ENCODE measurements at regions of chr14 and their contacts with region 1.

Region 1: GRCh38 chr14:45267071-45267470 is 14.1 kb upstream of the MIS18BP1 start:
- DNase-seq: no peak
- ATAC-seq: no peak
- H3K4me3 Mint-ChIP-seq: no peak overlapping the region
- H3K27ac Mint-ChIP-seq: no peak overlapping the region
- H3K4me1 Mint-ChIP-seq: no peaks in the 10 kb centered on the region
- H3K27me3 Mint-ChIP-seq: no peaks in the 10 kb centered on the region
- CTCF ChIP-seq: no peak

Region 2: GRCh38 chr14:44912041-44912869 is 354.8 kb before region 1 on chr14:
- CTCF ChIA-PET with region 1: interaction called, 14 read pairs
- POLR2A ChIA-PET with region 1: no interaction called
- intact Hi-C with region 1: no loop called
- DNase-seq: no peak
- ATAC-seq: peak; percentile 42
- H3K4me3 Mint-ChIP-seq: peak overlapping the region; percentile 21
- H3K27ac Mint-ChIP-seq: no peak overlapping the region
- H3K4me1 Mint-ChIP-seq: peaks cover 6% of the 10 kb centered on the region
- H3K27me3 Mint-ChIP-seq: peaks cover 26% of the 10 kb centered on the region
- CTCF ChIP-seq: no peak

Region 3: GRCh38 chr14:45253068-45253753 is 13.9 kb before region 1 on chr14 and contains the start of gene MIS18BP1:
- CTCF ChIA-PET with region 1: interaction called, 20 read pairs
- POLR2A ChIA-PET with region 1: interaction called, 3 read pairs
- intact Hi-C with region 1: no loop called
- DNase-seq: peak; percentile 97
- ATAC-seq: peak; percentile 93
- H3K4me3 Mint-ChIP-seq: peak within 1 kb of the TSS; percentile 91
- H3K27ac Mint-ChIP-seq: peak within 1 kb of the TSS; percentile 96
- H3K4me1 Mint-ChIP-seq: peaks cover 24% of the 10 kb centered on the region
- H3K27me3 Mint-ChIP-seq: no peaks in the 10 kb centered on the region
- CTCF ChIP-seq: peak; percentile 76
- total RNA-seq, gene MIS18BP1: 51.0 to 55.8 TPM

Region 4: DNA sequence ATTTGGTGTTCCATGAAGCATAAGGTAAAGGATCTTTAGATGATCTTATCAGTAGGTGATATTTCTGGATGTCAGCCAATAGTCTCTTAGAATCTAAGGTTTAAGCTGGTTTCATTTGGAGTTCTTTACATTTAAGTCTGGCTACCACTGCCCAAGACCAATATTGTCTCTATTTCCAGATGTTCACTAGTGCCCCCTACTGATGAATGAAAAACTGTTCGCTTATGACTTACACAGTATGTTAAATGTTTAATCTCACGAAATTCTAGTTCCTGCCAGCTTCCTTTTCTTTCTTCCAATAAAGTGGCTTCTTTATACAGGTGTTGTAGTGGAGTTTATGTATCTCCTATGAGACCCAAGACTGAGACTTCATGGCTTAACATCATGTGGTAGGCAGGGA is 17.7 kb after region 1 on chr14:
- CTCF ChIA-PET with region 1: interaction called, 10 read pairs
- POLR2A ChIA-PET with region 1: no interaction called
- intact Hi-C with region 1: no loop called
- DNase-seq: no peak
- ATAC-seq: no peak
- H3K4me3 Mint-ChIP-seq: no peak overlapping the region
- H3K27ac Mint-ChIP-seq: no peak overlapping the region
- H3K4me1 Mint-ChIP-seq: no peaks in the 10 kb centered on the region
- H3K27me3 Mint-ChIP-seq: peaks cover 9% of the 10 kb centered on the region
- CTCF ChIP-seq: no peak

Measured in activated CD8-positive, alpha-beta T cell treated with anti-CD3 and anti-CD28 coated beads for 36 hours (primary cell).